ENCODE measurements at regions of chr3 and their contacts with region 1.

Region 1: GRCh38 chr3:71805199-71805598 is 20.3 kb upstream of the PROK2 start:
- DNase-seq: peak; percentile 63 to 80 (median 65)
- H3K4me3 ChIP-seq: peak overlapping the region in 1 of 3 experiments; percentile 36
- H3K4me3 Mint-ChIP-seq: no peak overlapping the region
- H3K27ac ChIP-seq: peak overlapping the region; percentile 26 to 89
- H3K27ac Mint-ChIP-seq: peak overlapping the region; percentile 81 to 93 (median 87)
- H3K4me1 ChIP-seq: peaks cover 16 to 27% of the 10 kb centered on the region in 2 donors
- H3K4me1 Mint-ChIP-seq: peaks cover 35% of the 10 kb centered on the region
- H3K27me3 ChIP-seq: no peaks in the 10 kb centered on the region
- H3K27me3 Mint-ChIP-seq: peaks cover 0 to 2% (median 2%) of the 10 kb centered on the region in 3 donors
- CTCF ChIP-seq: no peak

Region 2: GRCh38 chr3:71859123-71859519 is 53.9 kb after region 1 on chr3:
- intact Hi-C with region 1: loop called in 1 of 2 experiments (anchors 5 kb)
- DNase-seq: peak; percentile 78 to 93 (median 83)
- H3K4me3 ChIP-seq: peak overlapping the region in 1 of 3 experiments; percentile 26
- H3K4me3 Mint-ChIP-seq: peak overlapping the region; percentile 6 to 57
- H3K27ac ChIP-seq: peak overlapping the region in 1 of 2 donors; percentile 18
- H3K27ac Mint-ChIP-seq: peak overlapping the region; percentile 73 to 95 (median 84)
- H3K4me1 ChIP-seq: peaks cover 14 to 27% of the 10 kb centered on the region in 2 donors
- H3K4me1 Mint-ChIP-seq: peaks cover 28% of the 10 kb centered on the region
- H3K27me3 ChIP-seq: peaks cover under 1 to 4% of the 10 kb centered on the region in 2 donors
- H3K27me3 Mint-ChIP-seq: peaks cover 4 to 13% (median 5%) of the 10 kb centered on the region in 3 donors
- CTCF ChIP-seq: peak; percentile 77

Region 3: DNA sequence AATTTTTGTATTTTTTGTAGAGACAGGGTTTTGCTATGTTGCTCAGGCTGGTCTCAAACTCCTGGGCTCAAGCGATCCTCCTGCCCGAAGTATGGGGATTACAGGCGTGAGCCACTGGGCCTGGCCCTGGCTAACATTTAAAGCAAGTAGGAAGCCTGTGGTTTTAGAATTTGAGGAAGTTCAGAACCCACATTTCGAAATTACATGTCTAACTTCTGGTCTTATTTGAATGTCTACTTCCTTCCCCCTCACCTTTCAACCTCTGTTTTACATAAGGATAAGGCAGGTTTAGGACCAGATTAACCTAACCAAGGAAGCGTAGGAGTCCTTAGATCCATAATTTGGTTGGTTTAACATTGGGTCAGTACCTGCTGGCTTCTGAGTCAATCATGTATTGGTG is 100.2 kb after region 1 on chr3:
- intact Hi-C with region 1: no loop called
- DNase-seq: peak; percentile 78 to 93 (median 88)
- H3K4me3 ChIP-seq: peak overlapping the region in 1 of 3 experiments; percentile 27
- H3K4me3 Mint-ChIP-seq: peak overlapping the region; percentile 39 to 76
- H3K27ac ChIP-seq: no peak overlapping the region
- H3K27ac Mint-ChIP-seq: peak overlapping the region in 6 of 7 donors; percentile 48 to 76 (median 64)
- H3K4me1 ChIP-seq: peaks cover 45 to 50% of the 10 kb centered on the region in 2 donors
- H3K4me1 Mint-ChIP-seq: peaks cover 51% of the 10 kb centered on the region
- H3K27me3 ChIP-seq: peaks cover 67 to 84% of the 10 kb centered on the region in 2 donors
- H3K27me3 Mint-ChIP-seq: peaks cover 92 to 95% (median 94%) of the 10 kb centered on the region in 3 donors
- CTCF ChIP-seq: no peak

Region 4: GRCh38 chr3:72347819-72348319 is 542.7 kb after region 1 on chr3:
- intact Hi-C with region 1: no loop called
- DNase-seq: peak; percentile 88 to 92 (median 91)
- H3K4me3 ChIP-seq: peak overlapping the region in 1 of 3 experiments; percentile 55
- H3K4me3 Mint-ChIP-seq: peak overlapping the region; percentile 49 to 83
- H3K27ac ChIP-seq: peak overlapping the region; percentile 25 to 59
- H3K27ac Mint-ChIP-seq: peak overlapping the region in 5 of 7 donors; percentile 75 to 86 (median 77)
- H3K4me1 ChIP-seq: peaks cover 48 to 49% of the 10 kb centered on the region in 2 donors
- H3K4me1 Mint-ChIP-seq: peaks cover 53% of the 10 kb centered on the region
- H3K27me3 ChIP-seq: no peaks in the 10 kb centered on the region
- H3K27me3 Mint-ChIP-seq: peaks cover 2 to 18% (median 10%) of the 10 kb centered on the region in 3 donors
- CTCF ChIP-seq: no peak